Tibial artery (tissue), 4 donors: ENCODE measurements at regions of chr17 and their contacts with region 1.

Region 1: GRCh38 chr17:20009302-20010098 is at the start of gene SPECC1:
- DNase-seq: peak; percentile 84 to 91
- H3K4me3 ChIP-seq: peak within 1 kb of the TSS; percentile 67 to 92
- H3K27ac ChIP-seq: peak within 1 kb of the TSS; percentile 87 to 94
- H3K4me1 ChIP-seq: peaks cover 0 to 19% (median 7%) of the 10 kb centered on the region in 4 donors
- H3K27me3 ChIP-seq: no peaks in the 10 kb centered on the region
- CTCF ChIP-seq: peak; percentile 99 to 100

Region 2: DNA sequence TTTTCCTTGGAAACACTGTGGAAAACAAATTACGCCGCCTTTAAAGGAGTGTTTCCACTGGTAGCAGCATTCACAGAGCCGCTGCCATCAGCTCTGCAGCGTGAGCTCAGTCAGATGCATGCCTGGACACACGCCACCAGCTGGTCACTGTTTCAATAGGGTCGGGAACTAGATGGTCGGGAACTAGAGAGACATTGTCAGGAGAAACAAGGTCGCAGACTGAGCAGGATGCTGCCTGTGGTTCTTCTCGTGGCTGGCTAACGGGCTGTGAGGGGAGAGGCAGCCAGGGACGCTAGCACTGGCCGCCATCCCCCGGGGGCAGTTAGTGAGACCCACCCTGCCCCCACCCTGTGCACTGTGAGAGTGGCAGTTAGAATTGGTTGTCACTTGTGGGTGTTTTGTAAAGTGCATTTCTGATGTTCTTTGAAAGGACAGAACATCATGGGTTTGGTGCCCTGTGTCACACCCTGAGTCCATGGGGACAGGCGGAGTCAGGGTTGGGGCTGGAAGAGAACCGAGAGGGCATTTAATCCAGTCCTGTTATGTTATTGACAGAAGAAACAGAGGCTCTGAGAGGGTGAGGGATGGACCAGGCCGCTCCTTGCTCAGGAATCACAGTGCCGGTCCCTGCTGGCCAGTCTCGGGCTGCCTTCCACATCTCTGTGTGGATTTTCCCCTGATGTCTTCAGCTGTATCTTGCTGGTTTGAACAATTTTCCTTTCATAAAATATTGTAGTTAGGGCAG is 86.0 kb after region 1 on chr17:
- intact Hi-C with region 1: loop called (anchors 5 kb)
- DNase-seq: peak; percentile 82 to 92
- H3K4me3 ChIP-seq: peak overlapping the region; percentile 17 to 29
- H3K27ac ChIP-seq: peak overlapping the region; percentile 76 to 89
- H3K4me1 ChIP-seq: peaks cover 6 to 63% (median 30%) of the 10 kb centered on the region in 4 donors
- H3K27me3 ChIP-seq: no peaks in the 10 kb centered on the region
- CTCF ChIP-seq: peak; percentile 35 to 39